Naive thymus-derived CD4-positive, alpha-beta T cell (primary cell): ENCODE measurements at regions of chr11 and their contacts with region 1.

Region 1: GRCh38 chr11:59668950-59669610 is at the start of gene PATL1:
- DNase-seq: peak; percentile 96 to 100 (median 99)
- ATAC-seq: peak; percentile 94
- H3K4me3 ChIP-seq: peak within 1 kb of the TSS; percentile 94
- H3K4me3 Mint-ChIP-seq: peak within 1 kb of the TSS; percentile 83 to 100 (median 96)
- H3K27ac ChIP-seq: peak within 1 kb of the TSS; percentile 98
- H3K27ac Mint-ChIP-seq: peak within 1 kb of the TSS; percentile 97 to 100 (median 99)
- H3K4me1 ChIP-seq: peaks cover 17 to 23% of the 10 kb centered on the region in 2 donors
- H3K4me1 Mint-ChIP-seq: peaks cover 32 to 50% (median 41%) of the 10 kb centered on the region in 7 donors
- H3K27me3 ChIP-seq: no peaks in the 10 kb centered on the region
- H3K27me3 Mint-ChIP-seq: peaks cover 0 to 2% (median 0%) of the 10 kb centered on the region in 5 donors
- total RNA-seq, gene PATL1: 40.6 to 60.1 (median 45.3) TPM

Region 2: GRCh38 chr11:59542142-59542810 is 126.8 kb before region 1 on chr11:
- CTCF ChIA-PET with region 1: no interaction called
- POLR2A ChIA-PET with region 1: interaction called, 4 read pairs
- intact Hi-C with region 1: loop called in 1 of 2 experiments (anchors 1 kb)
- DNase-seq: no peak
- ATAC-seq: no peak
- H3K4me3 ChIP-seq: no peak overlapping the region
- H3K4me3 Mint-ChIP-seq: no peak overlapping the region
- H3K27ac ChIP-seq: no peak overlapping the region
- H3K27ac Mint-ChIP-seq: no peak overlapping the region
- H3K4me1 ChIP-seq: no peaks in the 10 kb centered on the region
- H3K4me1 Mint-ChIP-seq: peaks cover 7 to 9% (median 8%) of the 10 kb centered on the region in 7 donors
- H3K27me3 ChIP-seq: no peaks in the 10 kb centered on the region
- H3K27me3 Mint-ChIP-seq: peaks cover 0 to 6% (median 0%) of the 10 kb centered on the region in 5 donors

Region 3: DNA sequence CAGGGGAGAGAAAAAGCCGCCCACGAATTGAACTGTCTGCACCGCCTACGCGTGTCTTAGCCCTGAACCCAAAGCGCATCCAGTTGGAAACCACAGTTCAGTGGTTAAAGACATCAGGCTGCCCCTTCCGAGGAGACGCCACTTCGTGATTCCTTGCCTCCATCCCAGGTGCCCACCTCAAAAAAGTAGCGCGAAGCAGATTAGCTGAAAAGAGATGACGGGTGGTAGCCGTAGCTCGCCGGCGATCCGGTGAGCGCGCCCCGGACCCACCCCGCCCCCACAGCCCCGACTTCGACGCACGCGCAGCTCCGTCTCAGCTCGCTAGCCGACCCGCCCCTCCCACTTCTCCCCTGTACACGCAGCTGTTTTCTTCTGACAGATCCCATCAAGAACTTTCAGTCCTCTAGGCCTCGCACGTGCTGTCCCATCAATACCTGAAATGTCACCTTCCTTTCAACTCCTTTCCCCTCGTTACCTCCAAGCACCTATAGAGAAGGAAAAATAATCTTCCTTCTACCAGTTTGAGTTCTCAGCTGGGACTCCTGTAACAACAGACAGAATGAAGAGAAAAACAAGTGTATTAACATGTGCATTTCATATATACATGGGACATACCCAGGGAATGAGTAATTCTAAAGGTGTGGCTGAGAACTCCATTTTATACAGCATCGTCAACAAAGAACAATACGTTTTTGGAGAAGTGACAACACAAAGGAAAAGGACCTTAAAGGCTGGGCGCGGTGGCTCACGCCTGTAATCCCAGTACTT is 108.2 kb before region 1 on chr11:
- CTCF ChIA-PET with region 1: no interaction called
- POLR2A ChIA-PET with region 1: interaction called, 18 read pairs
- intact Hi-C with region 1: loop called in 1 of 2 experiments (anchors 1 kb)
- DNase-seq: peak; percentile 59 to 82 (median 78)
- ATAC-seq: peak; percentile 85
- H3K4me3 ChIP-seq: peak overlapping the region; percentile 98
- H3K4me3 Mint-ChIP-seq: peak overlapping the region; percentile 81 to 99 (median 96)
- H3K27ac ChIP-seq: peak overlapping the region; percentile 72
- H3K27ac Mint-ChIP-seq: peak overlapping the region; percentile 87 to 99 (median 96)
- H3K4me1 ChIP-seq: peaks cover 20 to 26% of the 10 kb centered on the region in 2 donors
- H3K4me1 Mint-ChIP-seq: peaks cover 27 to 63% (median 51%) of the 10 kb centered on the region in 7 donors
- H3K27me3 ChIP-seq: no peaks in the 10 kb centered on the region
- H3K27me3 Mint-ChIP-seq: peaks cover 0 to 14% (median 0%) of the 10 kb centered on the region in 5 donors

Region 4: GRCh38 chr11:59647245-59647980 is 21.7 kb before region 1 on chr11:
- CTCF ChIA-PET with region 1: no interaction called
- POLR2A ChIA-PET with region 1: interaction called, 3 read pairs
- intact Hi-C with region 1: loop called in 1 of 2 experiments (anchors 2 kb)
- DNase-seq: no peak
- ATAC-seq: no peak
- H3K4me3 ChIP-seq: no peak overlapping the region
- H3K4me3 Mint-ChIP-seq: no peak overlapping the region
- H3K27ac ChIP-seq: no peak overlapping the region
- H3K27ac Mint-ChIP-seq: peak overlapping the region in 2 of 9 donors; percentile 33 to 62
- H3K4me1 ChIP-seq: no peaks in the 10 kb centered on the region
- H3K4me1 Mint-ChIP-seq: peaks cover 0 to 10% (median 0%) of the 10 kb centered on the region in 7 donors
- H3K27me3 ChIP-seq: no peaks in the 10 kb centered on the region
- H3K27me3 Mint-ChIP-seq: no peaks in the 10 kb centered on the region

Region 5: DNA sequence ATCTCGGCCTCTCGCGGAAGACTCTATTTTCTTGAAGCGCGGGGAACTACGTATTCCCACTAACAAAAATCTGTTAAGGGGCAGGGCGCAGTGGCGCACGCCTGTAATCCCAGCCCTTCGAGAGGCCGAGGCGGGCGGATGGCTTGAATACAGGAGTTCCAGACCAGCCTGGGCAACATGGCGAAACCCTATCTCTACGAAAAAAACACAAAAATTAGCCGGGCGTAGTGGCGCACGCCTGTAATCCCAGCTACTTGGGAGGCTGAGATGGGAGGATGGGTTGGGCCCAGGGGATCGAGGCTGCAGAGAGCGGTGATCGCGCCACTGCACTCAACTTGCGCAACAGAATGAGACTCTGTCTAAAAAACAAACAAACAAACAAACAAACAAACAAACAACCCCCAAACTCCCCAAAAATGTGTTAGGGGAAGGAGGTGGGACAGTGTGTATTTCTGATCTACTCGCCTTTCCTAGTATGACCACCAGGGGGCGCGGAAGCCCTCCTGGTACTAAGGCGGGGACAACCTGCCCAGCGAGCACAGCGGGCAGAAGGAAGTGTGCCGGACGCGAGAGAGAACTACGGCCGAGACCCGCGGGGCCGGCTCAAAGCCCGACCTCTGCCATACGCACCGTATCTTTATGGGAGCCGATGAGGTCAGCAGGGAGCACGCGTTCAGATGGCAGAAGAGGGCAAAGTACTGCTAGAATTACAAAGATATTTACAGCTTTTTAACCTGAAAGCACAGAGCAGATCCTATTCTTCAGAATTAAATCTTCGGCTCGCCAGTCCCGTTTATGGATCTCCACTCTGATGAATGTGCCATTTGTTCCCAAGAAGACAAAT is 84.8 kb after region 1 on chr11:
- CTCF ChIA-PET with region 1: interaction called, 4 read pairs
- POLR2A ChIA-PET with region 1: interaction called, 4 read pairs
- intact Hi-C with region 1: loop called (anchors 1 to 2 kb)
- DNase-seq: peak; percentile 65 to 84 (median 75)
- ATAC-seq: peak; percentile 80
- H3K4me3 ChIP-seq: peak overlapping the region; percentile 91
- H3K4me3 Mint-ChIP-seq: peak overlapping the region; percentile 90 to 98 (median 95)
- H3K27ac ChIP-seq: peak overlapping the region; percentile 61
- H3K27ac Mint-ChIP-seq: peak overlapping the region; percentile 32 to 88 (median 71)
- H3K4me1 ChIP-seq: peaks cover 8 to 12% of the 10 kb centered on the region in 2 donors
- H3K4me1 Mint-ChIP-seq: peaks cover 11 to 35% (median 23%) of the 10 kb centered on the region in 7 donors
- H3K27me3 ChIP-seq: no peaks in the 10 kb centered on the region
- H3K27me3 Mint-ChIP-seq: peaks cover 6 to 15% (median 10%) of the 10 kb centered on the region in 5 donors

Region 6: DNA sequence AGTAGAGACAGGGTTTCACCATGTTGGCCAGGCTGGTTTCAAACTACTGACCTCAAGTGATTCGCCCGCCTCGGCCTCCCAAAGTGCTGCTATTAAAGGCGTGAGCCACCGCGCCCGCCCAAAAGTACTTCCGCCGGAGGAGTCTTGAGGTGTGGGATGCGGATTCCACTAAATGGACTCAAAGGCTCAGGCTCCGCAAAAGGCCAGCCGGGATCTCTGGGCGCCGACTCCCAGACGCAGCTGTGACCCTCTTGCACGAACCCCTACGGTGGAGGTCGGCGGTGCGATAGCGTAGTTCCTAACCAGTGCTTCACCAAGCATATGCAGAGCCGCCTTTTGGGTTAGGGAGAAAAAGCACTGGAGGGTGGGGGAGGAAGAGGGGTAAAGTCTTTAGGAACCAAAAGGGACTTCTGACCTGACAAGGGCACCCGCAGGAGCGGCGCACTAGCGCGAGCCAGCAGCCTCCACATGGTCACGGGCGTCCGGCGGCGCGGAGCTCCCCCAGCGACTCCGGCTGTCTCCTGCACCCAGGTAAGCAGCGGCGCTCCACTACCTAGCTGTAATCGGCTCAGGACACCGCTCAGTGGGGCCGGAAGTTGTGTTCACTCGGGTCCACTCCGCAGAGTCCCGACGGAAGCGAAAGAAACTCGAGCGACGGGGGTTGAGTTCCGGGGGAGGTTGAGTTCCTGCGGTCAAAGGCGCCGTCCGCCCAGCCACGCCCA is 141.3 kb after region 1 on chr11 and contains the start of gene MRPL16:
- CTCF ChIA-PET with region 1: no interaction called
- POLR2A ChIA-PET with region 1: no interaction called
- intact Hi-C with region 1: loop called (anchors 1 kb)
- DNase-seq: peak; percentile 74 to 89 (median 83)
- ATAC-seq: peak; percentile 100
- H3K4me3 ChIP-seq: peak within 1 kb of the TSS; percentile 83
- H3K4me3 Mint-ChIP-seq: peak within 1 kb of the TSS; percentile 88 to 95 (median 92)
- H3K27ac ChIP-seq: peak within 1 kb of the TSS; percentile 75
- H3K27ac Mint-ChIP-seq: peak within 1 kb of the TSS; percentile 86 to 94 (median 92)
- H3K4me1 ChIP-seq: peaks cover 4 to 9% of the 10 kb centered on the region in 2 donors
- H3K4me1 Mint-ChIP-seq: peaks cover 6 to 35% (median 29%) of the 10 kb centered on the region in 7 donors
- H3K27me3 ChIP-seq: no peaks in the 10 kb centered on the region
- H3K27me3 Mint-ChIP-seq: peaks cover 0 to 7% (median 0%) of the 10 kb centered on the region in 5 donors
- total RNA-seq, gene MRPL16: 25.1 to 65.6 (median 35.2) TPM